ENCODE measurements at regions of chr9 and their contacts with region 1.

Region 1: DNA sequence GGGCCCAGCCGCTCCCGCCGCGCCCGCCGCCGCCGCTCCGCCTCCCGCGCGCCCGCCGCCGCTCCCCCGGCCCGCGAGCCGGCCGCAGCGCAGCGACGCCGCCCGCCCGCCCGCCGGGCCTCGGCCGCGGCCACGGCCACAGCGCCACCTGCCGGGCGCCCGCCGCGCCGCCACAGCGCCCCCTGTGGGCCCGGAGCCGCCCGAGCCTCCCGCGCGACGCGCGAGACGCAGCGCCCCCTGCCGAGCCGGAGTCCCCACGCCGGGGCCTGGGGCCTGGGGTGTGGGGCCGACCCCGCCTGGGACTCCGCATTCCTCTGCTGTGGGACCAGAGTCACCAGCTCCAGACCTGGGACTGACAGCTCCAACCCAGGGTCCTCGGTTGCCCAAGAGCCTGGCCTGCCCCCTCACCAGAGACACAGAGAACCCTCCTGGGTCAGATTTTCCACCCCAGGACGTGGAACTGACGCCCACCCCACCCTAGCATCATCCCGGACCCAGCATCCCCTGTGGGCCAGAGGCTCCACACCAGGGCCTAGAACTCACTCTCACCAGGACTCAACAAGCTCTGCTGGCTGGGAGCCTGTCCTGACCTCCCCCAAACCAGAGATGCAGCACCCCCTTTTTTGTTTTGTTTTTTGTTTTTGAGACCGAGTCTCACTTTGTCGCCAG is at the start of gene RAPGEF1:
- DNase-seq: peak in 1 of 2 donors; percentile 79
- ATAC-seq: peak; percentile 33
- total RNA-seq, gene RAPGEF1: 61.2 to 75.0 TPM

Region 2: GRCh38 chr9:131239307-131239975 is 500.7 kb before region 1 on chr9:
- intact Hi-C with region 1: no loop called
- DNase-seq: no peak
- ATAC-seq: no peak

Region 3: GRCh38 chr9:131590908-131591844 is 148.9 kb before region 1 on chr9:
- intact Hi-C with region 1: loop called (anchors 5 kb)
- DNase-seq: peak; percentile 77 to 88
- ATAC-seq: peak; percentile 94